ENCODE measurements at regions of chr10 and their contacts with region 1.

Region 1: GRCh38 chr10:45464958-45465567 is 91.0 kb downstream of the ALOX5 start:
- DNase-seq: peak; percentile 71 to 78
- H3K4me3 ChIP-seq: no peak overlapping the region
- H3K27ac ChIP-seq: no peak overlapping the region
- H3K4me1 ChIP-seq: peaks cover 0 to 6% of the 10 kb centered on the region in 2 donors
- H3K27me3 ChIP-seq: no peaks in the 10 kb centered on the region
- CTCF ChIP-seq: peak; percentile 79 to 88 (median 84)
- POLR2A ChIP-seq: no peak

Region 2: GRCh38 chr10:45249978-45250693 is 214.9 kb before region 1 on chr10:
- intact Hi-C with region 1: loop called (anchors 10 kb)
- DNase-seq: peak in 1 of 2 donors; percentile 19
- H3K4me3 ChIP-seq: no peak overlapping the region
- H3K27ac ChIP-seq: no peak overlapping the region
- H3K4me1 ChIP-seq: no peaks in the 10 kb centered on the region
- H3K27me3 ChIP-seq: no peaks in the 10 kb centered on the region
- CTCF ChIP-seq: peak; percentile 24 to 63 (median 42)
- POLR2A ChIP-seq: no peak

Region 3: GRCh38 chr10:45594276-45595106 is 129.4 kb after region 1 on chr10:
- intact Hi-C with region 1: loop called (anchors 10 kb)
- DNase-seq: peak; percentile 95
- H3K4me3 ChIP-seq: peak overlapping the region; percentile 7 to 79 (median 61)
- H3K27ac ChIP-seq: peak overlapping the region; percentile 21 to 76 (median 66)
- H3K4me1 ChIP-seq: peaks cover 11 to 12% of the 10 kb centered on the region in 2 donors
- H3K27me3 ChIP-seq: no peaks in the 10 kb centered on the region
- CTCF ChIP-seq: peak in 1 of 6 experiments; percentile 2
- POLR2A ChIP-seq: peak; percentile 2 to 73

Region 4: DNA sequence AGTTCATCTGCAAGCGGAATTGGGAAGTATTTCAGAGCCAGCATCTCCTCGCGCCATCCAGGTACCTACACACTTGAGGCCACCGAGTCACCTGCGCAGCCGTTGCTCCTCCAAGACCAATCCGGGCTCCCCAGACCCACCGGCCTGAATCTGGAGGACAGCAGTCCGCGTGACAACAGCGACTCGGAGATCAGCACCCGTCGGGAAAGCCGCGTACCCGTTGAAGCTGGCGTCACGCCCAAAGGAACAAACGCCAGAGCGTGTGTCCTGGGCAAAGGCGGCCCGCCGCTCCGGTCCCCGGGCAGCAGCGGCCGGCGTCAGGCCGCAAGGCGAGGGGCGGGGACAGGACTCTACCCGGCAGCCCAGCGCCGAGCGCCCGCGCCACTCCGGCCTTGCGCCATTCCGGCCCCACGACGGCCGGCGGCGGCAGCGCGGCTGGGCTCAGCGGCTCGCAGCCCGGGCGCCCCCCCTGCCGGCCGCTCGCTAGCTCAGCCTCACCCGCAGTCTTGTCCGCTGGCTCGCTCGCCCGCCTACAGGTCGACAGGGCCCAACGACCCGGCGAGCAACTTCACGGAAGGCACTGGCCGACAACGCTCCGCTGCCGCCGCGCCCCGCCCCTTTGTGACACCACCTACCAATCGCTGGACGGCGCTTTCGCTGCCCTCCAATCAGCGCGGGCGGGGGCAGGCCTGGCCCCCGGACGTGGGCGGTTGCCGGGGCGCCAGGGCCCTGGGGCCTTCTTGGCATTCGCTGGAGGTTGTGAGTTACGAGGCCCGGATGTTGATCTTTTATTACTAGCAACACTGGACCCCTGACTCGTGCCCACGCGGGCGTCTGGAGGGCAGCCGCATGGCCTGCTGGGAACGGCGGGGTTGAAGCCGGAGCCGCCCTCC is 207.4 kb after region 1 on chr10 and contains the start of gene ZFAND4:
- intact Hi-C with region 1: loop called (anchors 10 kb)
- DNase-seq: peak; percentile 98
- H3K4me3 ChIP-seq: peak within 1 kb of the TSS; percentile 78 to 90 (median 81)
- H3K27ac ChIP-seq: peak within 1 kb of the TSS; percentile 88 to 90 (median 89)
- H3K4me1 ChIP-seq: peaks cover 0 to 6% of the 10 kb centered on the region in 2 donors
- H3K27me3 ChIP-seq: no peaks in the 10 kb centered on the region
- CTCF ChIP-seq: peak in 3 of 6 experiments; percentile 64 to 81 (median 80)
- POLR2A ChIP-seq: peak in 1 of 2 donors; percentile 92
- total RNA-seq, gene ZFAND4: 43.2 to 52.0 (median 49.9) TPM

Measured in thyroid gland (tissue), 4 donors.